ENCODE measurements at regions of chr22 and their contacts with region 1.

Region 1: GRCh38 chr22:50498322-50498890 is 9.1 kb downstream of the LMF2 start:
- DNase-seq: peak; percentile 85
- ATAC-seq: peak; percentile 97
- H3K4me3 Mint-ChIP-seq: no peak overlapping the region
- H3K27ac Mint-ChIP-seq: no peak overlapping the region
- H3K4me1 Mint-ChIP-seq: peaks cover 6% of the 10 kb centered on the region
- H3K27me3 Mint-ChIP-seq: peaks cover 3% of the 10 kb centered on the region
- CTCF ChIP-seq: peak; percentile 33; the same call in 1 of the 2 replicates

Region 2: GRCh38 chr22:50399751-50400331 is 98.6 kb before region 1 on chr22:
- CTCF ChIA-PET with region 1: interaction called, 14 read pairs
- POLR2A ChIA-PET with region 1: no interaction called
- DNase-seq: peak; percentile 74
- ATAC-seq: peak; percentile 97
- H3K4me3 Mint-ChIP-seq: no peak overlapping the region
- H3K27ac Mint-ChIP-seq: peak overlapping the region; percentile 82
- H3K4me1 Mint-ChIP-seq: peaks cover 15% of the 10 kb centered on the region
- H3K27me3 Mint-ChIP-seq: no peaks in the 10 kb centered on the region
- CTCF ChIP-seq: no peak

Region 3: GRCh38 chr22:50469377-50470305 is 28.8 kb before region 1 on chr22:
- CTCF ChIA-PET with region 1: interaction called, 12 read pairs
- POLR2A ChIA-PET with region 1: no interaction called
- DNase-seq: peak; percentile 51
- ATAC-seq: peak; percentile 62
- H3K4me3 Mint-ChIP-seq: no peak overlapping the region
- H3K27ac Mint-ChIP-seq: no peak overlapping the region
- H3K4me1 Mint-ChIP-seq: peaks cover 24% of the 10 kb centered on the region
- H3K27me3 Mint-ChIP-seq: no peaks in the 10 kb centered on the region
- CTCF ChIP-seq: no peak

Measured in WTC11 (cell line).